Astrocyte of the cerebellum (primary cell): ENCODE measurements at regions of chr12 and their contacts with region 1.

Region 1: DNA sequence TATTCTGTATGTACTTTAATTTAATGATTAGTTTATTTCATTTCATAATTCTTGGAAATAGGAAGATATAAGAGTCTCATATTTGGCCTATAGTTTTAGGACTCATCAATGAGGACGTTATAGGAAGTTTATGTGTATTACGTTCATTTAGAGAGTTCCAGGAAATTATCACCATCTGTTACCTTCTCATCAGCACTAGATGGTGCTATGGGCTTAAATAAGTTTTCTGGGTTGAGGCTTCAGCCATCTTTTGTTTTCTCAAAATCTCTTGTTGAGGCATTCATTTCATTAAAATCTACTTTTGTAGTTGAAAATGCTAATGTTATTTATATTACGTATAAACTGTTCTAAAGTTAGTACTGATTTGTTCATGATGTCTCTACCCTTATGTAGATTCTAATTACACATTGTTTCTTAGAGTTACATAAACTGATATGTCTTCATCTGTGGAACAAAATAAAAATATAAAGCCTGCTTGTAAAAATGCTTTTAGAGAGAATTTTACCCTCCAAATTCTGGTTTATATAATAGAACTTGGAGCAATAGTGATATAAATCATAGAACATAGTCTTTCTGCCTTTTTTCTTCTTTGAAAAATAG is 89.2 kb downstream of the CFAP54 start:
- DNase-seq: peak; percentile 53
- H3K4me3 ChIP-seq: no peak overlapping the region
- CTCF ChIP-seq: peak; percentile 46

Region 2: DNA sequence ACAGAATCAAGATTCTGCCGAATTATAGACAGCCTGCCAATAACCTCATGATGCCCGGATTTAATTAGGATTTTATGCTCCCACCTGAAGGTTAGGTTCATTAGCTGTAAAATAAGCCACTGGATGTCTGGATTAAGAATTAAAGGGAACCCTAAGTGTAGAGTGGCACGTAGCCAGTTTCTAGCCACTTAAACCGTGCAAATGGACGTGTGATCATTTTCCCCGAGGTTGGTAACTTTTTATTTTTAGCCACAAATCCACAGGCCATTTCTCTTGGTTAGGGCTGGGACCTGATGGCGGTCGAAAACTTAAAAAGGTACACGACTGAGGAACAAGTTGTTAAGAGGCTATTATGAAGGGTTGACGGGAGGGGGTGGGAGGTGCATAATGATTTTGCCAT is 1809.5 kb after region 1 on chr12:
- in situ Hi-C with region 1: loop called (anchors 5 kb)
- DNase-seq: no peak
- H3K4me3 ChIP-seq: no peak overlapping the region
- CTCF ChIP-seq: no peak